AG04450 (cell line): ENCODE measurements at regions of chr2 and their contacts with region 1.

Region 1: GRCh38 chr2:215401896-215402379 is 33.9 kb downstream of the FN1 start:
- DNase-seq: peak; percentile 90
- H3K4me3 ChIP-seq: no peak overlapping the region
- H3K27ac ChIP-seq: peak overlapping the region; percentile 54
- H3K27me3 ChIP-seq: no peaks in the 10 kb centered on the region
- CTCF ChIP-seq: no peak

Region 2: GRCh38 chr2:215657844-215658243 is 255.9 kb after region 1 on chr2:
- CTCF ChIA-PET with region 1: interaction called, 8 read pairs
- POLR2A ChIA-PET with region 1: interaction called, 12 read pairs
- DNase-seq: peak; percentile 97
- H3K4me3 ChIP-seq: no peak overlapping the region
- H3K27ac ChIP-seq: peak overlapping the region; percentile 59
- H3K27me3 ChIP-seq: no peaks in the 10 kb centered on the region
- CTCF ChIP-seq: peak; percentile 13; the same call in 1 of the 2 replicates

Region 3: GRCh38 chr2:215711471-215712034 is 309.6 kb after region 1 on chr2:
- CTCF ChIA-PET with region 1: no interaction called
- POLR2A ChIA-PET with region 1: no interaction called
- DNase-seq: no peak
- H3K4me3 ChIP-seq: no peak overlapping the region
- H3K27ac ChIP-seq: peak overlapping the region; percentile 25
- H3K27me3 ChIP-seq: no peaks in the 10 kb centered on the region
- CTCF ChIP-seq: no peak